A549 (cell line): ENCODE measurements at regions of chr11 and their contacts with region 1.

Region 1: GRCh38 chr11:12331239-12331874 is 46.0 kb upstream of the PARVA start:
- DNase-seq: peak; percentile 47 to 83
- ATAC-seq: peak; percentile 95 to 97
- H3K4me3 ChIP-seq: no peak overlapping the region
- H3K27ac ChIP-seq: no peak overlapping the region
- H3K4me1 ChIP-seq: peaks cover 8% of the 10 kb centered on the region; the same call in 1 of the 3 replicates
- CTCF ChIP-seq: peak; percentile 94
- EP300 ChIP-seq: no peak
- POLR2A ChIP-seq: no peak
- RAD21 ChIP-seq: peak; percentile 97 to 98

Region 2: DNA sequence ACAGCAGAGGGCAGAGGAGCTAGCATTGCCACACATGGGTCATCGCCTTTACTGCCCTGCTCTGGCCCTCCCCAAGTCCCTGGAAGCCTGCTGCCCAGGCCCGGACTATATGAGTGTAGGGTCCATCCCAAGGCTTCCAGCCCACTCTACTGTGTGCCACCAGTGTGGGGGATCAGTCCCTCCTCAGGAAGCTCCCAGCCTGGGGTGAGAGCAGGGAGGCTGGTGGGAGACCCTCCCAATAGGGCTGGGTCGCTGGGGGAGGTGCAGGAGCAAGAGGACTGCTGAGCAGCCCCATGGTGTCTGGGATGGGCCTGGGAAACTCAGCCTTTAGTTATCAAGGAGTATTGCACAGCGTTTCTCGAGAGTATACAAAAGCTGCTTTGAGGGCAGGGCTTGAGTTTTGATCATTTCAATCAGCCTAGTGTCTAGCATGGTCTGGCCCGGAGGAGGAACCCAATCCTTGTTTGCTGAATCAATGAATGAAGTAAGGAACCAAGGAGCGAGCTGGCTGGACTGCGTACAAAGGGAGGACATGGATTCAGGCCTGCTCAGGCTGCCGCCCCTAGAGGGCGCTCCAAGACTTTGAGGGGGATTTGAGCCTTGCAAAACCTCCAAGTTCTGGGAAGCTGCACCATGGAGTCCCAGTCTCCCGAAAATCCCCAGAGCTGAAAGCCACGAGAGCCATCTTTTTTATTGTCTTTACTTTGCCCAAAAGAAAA is 43.0 kb before region 1 on chr11:
- CTCF ChIA-PET with region 1: interaction called, 111 read pairs
- POLR2A ChIA-PET with region 1: interaction called, 3 read pairs
- DNase-seq: peak; percentile 88 to 90
- ATAC-seq: peak; percentile 43 to 77
- H3K4me3 ChIP-seq: no peak overlapping the region
- H3K27ac ChIP-seq: peak overlapping the region; percentile 94 to 99
- H3K4me1 ChIP-seq: peaks cover 46% of the 10 kb centered on the region
- CTCF ChIP-seq: peak; percentile 97
- EP300 ChIP-seq: no peak
- POLR2A ChIP-seq: no peak
- RAD21 ChIP-seq: peak; percentile 93 to 96

Region 3: GRCh38 chr11:12343526-12343925 is 12.2 kb after region 1 on chr11:
- CTCF ChIA-PET with region 1: interaction called, 22 read pairs
- POLR2A ChIA-PET with region 1: no interaction called
- DNase-seq: no peak
- ATAC-seq: no peak
- H3K4me3 ChIP-seq: no peak overlapping the region
- H3K27ac ChIP-seq: no peak overlapping the region
- H3K4me1 ChIP-seq: no peaks in the 10 kb centered on the region
- CTCF ChIP-seq: no peak
- EP300 ChIP-seq: no peak
- POLR2A ChIP-seq: no peak
- RAD21 ChIP-seq: no peak

Region 4: DNA sequence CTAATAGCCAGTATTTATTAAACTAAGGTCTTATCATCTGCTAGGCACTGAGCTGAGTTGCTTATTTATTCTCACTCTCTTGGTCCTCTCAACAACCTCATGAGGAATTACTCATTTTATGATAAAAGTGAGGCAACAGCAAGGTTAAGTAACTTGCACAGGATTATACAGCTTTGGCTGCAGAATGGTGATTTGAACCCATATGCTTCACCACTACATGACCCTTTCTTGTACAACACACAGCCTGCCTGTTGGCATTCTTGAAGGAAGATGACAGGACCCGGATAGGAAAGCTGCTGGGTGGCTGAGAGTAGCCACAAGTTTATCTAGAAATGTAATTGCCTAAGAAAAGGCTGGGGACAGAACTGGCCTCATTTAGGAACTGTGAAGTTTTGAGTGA is 40.8 kb after region 1 on chr11:
- CTCF ChIA-PET with region 1: interaction called, 10 read pairs
- POLR2A ChIA-PET with region 1: interaction called, 3 read pairs
- DNase-seq: no peak
- ATAC-seq: no peak
- H3K4me3 ChIP-seq: no peak overlapping the region
- H3K27ac ChIP-seq: no peak overlapping the region
- H3K4me1 ChIP-seq: peaks cover 3% of the 10 kb centered on the region
- CTCF ChIP-seq: no peak
- EP300 ChIP-seq: no peak
- POLR2A ChIP-seq: no peak
- RAD21 ChIP-seq: no peak

Region 5: GRCh38 chr11:12802418-12803085 is 471.2 kb after region 1 on chr11:
- CTCF ChIA-PET with region 1: interaction called, 11 read pairs
- POLR2A ChIA-PET with region 1: no interaction called
- DNase-seq: peak; percentile 94 to 97
- ATAC-seq: peak; percentile 80 to 81
- H3K4me3 ChIP-seq: peak overlapping the region; percentile 5; the same call in 1 of the 3 replicates
- H3K27ac ChIP-seq: peak overlapping the region; percentile 80 to 89
- H3K4me1 ChIP-seq: peaks cover 97% of the 10 kb centered on the region
- CTCF ChIP-seq: no peak
- EP300 ChIP-seq: peak; percentile 69 to 90; a peak in 3 of 5 replicates
- POLR2A ChIP-seq: no peak
- RAD21 ChIP-seq: peak; percentile 20 to 49; a peak in 4 of 5 replicates

Region 6: GRCh38 chr11:12900496-12900895 is 569.1 kb after region 1 on chr11:
- CTCF ChIA-PET with region 1: interaction called, 26 read pairs
- POLR2A ChIA-PET with region 1: no interaction called
- DNase-seq: peak in 1 of 2 experiments; percentile 37
- ATAC-seq: peak; percentile 48 to 70; a peak in 4 of 6 replicates
- H3K4me3 ChIP-seq: no peak overlapping the region
- H3K27ac ChIP-seq: no peak overlapping the region
- H3K4me1 ChIP-seq: peaks cover 20% of the 10 kb centered on the region; the same call in 2 of the 3 replicates
- CTCF ChIP-seq: no peak
- EP300 ChIP-seq: no peak
- POLR2A ChIP-seq: no peak
- RAD21 ChIP-seq: no peak

Region 7: DNA sequence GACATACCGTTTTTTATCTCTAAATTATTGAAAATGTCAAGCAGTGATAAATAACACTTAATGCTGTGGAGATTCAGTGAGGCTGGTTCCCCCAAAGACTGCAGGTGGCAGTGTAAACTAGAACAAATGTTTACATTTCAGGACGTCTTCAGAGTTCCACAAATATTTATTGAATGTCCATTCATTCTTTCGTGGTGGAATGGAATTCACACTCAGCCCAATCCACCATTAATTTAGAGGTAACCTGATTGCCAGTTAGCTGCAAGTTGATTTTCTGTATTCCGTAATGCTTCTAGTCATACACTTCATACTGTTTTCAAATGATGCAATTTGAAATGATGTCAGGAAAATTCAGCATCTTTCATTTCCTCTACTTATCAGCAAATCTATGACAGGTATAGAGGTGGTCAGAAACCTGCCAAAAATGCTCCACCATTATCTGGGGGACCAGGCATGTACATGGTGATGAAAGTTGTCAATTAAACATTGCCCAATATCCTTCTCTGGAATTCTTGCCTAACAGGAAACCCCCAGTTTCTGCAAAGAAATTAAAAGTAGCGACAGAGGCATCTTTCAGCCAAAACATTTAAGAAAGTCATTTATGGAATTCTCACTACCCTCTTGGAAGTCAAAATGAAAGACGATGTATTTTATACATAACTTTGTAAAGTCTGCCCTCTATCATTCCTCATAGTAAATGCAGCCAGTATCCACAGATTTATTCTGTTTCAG is 851.9 kb after region 1 on chr11:
- CTCF ChIA-PET with region 1: interaction called, 12 read pairs
- POLR2A ChIA-PET with region 1: no interaction called
- DNase-seq: peak; percentile 48 to 53
- ATAC-seq: peak; percentile 85 to 92
- H3K4me3 ChIP-seq: peak overlapping the region; percentile 42
- H3K27ac ChIP-seq: peak overlapping the region; percentile 54 to 69; a peak in 5 of 6 replicates
- H3K4me1 ChIP-seq: peaks cover 6% of the 10 kb centered on the region
- CTCF ChIP-seq: peak; percentile 60
- EP300 ChIP-seq: no peak
- POLR2A ChIP-seq: no peak
- RAD21 ChIP-seq: peak; percentile 76 to 80